ENCODE measurements at regions of chr21 and their contacts with region 1.

Region 1: GRCh38 chr21:29145354-29145782 is 14.9 kb downstream of the MAP3K7CL start:
- DNase-seq: peak in 1 of 2 donors; percentile 37
- ATAC-seq: peak; percentile 68 to 86 (median 82)
- H3K4me3 ChIP-seq: no peak overlapping the region
- H3K27ac ChIP-seq: peak overlapping the region in 9 of 10 donors; percentile 4 to 88 (median 78)
- H3K4me1 ChIP-seq: peaks cover 0 to 56% (median 27%) of the 10 kb centered on the region in 9 donors
- H3K27me3 ChIP-seq: no peaks in the 10 kb centered on the region
- CTCF ChIP-seq: no peak

Region 2: DNA sequence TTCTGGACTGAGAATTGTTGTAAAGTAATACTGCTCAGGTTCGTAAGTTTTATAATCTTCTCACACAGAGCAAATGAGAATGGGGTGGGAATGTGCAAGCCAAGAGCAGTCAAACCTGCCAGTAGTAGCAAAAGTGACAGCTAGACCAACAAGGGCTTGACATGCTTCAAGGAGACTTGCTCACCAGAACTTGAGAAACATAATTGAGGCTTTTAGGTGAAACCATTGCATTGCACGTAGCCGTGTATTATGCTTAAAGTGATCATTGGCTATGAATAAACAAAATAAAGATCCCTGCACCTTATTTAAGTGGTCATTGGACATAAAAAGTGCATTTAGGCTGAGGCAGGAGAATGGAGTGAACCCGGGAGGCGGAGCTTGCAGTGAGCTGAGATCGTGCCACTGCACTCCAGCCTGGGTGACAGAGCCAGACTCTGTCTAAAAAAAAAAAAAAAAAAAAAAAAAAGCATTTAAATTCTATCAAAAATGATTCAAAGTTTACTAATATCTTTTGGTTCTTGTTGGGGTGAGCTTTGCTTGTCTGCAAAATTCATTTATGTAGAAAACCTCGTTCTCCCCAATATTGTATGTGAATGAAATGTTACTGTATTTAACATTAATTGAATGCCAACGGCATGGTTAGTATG is 60.1 kb before region 1 on chr21:
- intact Hi-C with region 1: loop called in 3 of 10 experiments (anchors 5 to 10 kb)
- DNase-seq: no peak
- ATAC-seq: no peak
- H3K4me3 ChIP-seq: no peak overlapping the region
- H3K27ac ChIP-seq: peak overlapping the region in 2 of 10 donors; percentile 19 to 31
- H3K4me1 ChIP-seq: peaks cover 0 to 34% (median 24%) of the 10 kb centered on the region in 9 donors
- H3K27me3 ChIP-seq: no peaks in the 10 kb centered on the region
- CTCF ChIP-seq: no peak

Region 3: DNA sequence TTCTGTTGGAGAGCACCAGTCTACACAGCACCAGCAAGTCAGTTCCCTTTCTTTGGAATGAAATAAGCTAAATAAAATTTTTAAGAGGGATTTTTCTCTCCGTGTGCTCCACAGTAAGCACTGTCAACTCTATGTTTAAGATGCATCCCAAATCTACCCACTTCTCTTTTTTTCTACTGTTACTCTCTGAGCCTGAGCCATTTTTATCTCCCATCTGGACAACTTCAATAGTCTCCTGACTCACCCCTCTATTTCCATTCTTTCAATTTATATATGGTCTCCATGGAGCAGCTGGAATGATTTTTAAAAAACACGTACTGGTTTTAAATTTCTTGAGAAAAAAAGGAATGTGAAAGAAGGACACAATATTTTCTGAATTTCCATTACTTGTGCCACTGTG is 47.2 kb before region 1 on chr21:
- intact Hi-C with region 1: loop called in 3 of 10 experiments (anchors 5 to 10 kb)
- DNase-seq: no peak
- ATAC-seq: no peak
- H3K4me3 ChIP-seq: no peak overlapping the region
- H3K27ac ChIP-seq: peak overlapping the region in 1 of 10 donors; percentile 41
- H3K4me1 ChIP-seq: peaks cover 0 to 34% (median 0%) of the 10 kb centered on the region in 9 donors
- H3K27me3 ChIP-seq: no peaks in the 10 kb centered on the region
- CTCF ChIP-seq: no peak

Region 4: DNA sequence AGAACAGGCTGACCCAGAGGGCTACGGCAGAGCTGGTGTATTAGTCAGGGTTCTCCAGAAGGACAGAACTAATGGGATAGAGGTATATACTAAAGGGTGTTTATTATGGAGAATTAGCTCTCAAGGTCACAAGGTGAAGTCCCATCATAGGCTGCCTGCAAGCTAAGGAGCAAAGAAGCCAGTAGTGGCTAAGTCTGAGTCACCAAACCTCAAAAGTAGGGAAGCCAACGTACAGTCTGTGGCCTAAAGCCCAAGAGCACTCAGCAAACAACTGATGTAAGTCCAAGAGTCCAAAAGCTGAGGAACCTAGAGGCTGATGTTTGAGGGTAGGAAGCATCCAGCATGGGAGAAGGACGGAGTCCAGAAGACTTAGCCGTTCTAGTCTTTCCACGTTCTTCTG is 332.6 kb after region 1 on chr21:
- intact Hi-C with region 1: no loop called
- DNase-seq: no peak
- ATAC-seq: no peak
- H3K4me3 ChIP-seq: no peak overlapping the region
- H3K27ac ChIP-seq: no peak overlapping the region
- H3K4me1 ChIP-seq: peaks cover 0 to 5% (median 0%) of the 10 kb centered on the region in 9 donors
- H3K27me3 ChIP-seq: no peaks in the 10 kb centered on the region
- CTCF ChIP-seq: no peak

Measured in heart right ventricle (tissue), 16 donors.